Heart right ventricle (tissue), 16 donors: ENCODE measurements at regions of chr7 and their contacts with region 1.

Region 1: GRCh38 chr7:17640730-17641377 is 299.4 kb downstream of the SNX13 start:
- DNase-seq: peak in 1 of 2 donors; percentile 41
- ATAC-seq: no peak
- H3K4me3 ChIP-seq: no peak overlapping the region
- H3K27ac ChIP-seq: no peak overlapping the region
- H3K4me1 ChIP-seq: peaks cover 0 to 5% (median 0%) of the 10 kb centered on the region in 9 donors
- H3K27me3 ChIP-seq: no peaks in the 10 kb centered on the region
- CTCF ChIP-seq: peak; percentile 48 to 75 (median 65)

Region 2: GRCh38 chr7:16926283-16926682 is 714.6 kb before region 1 on chr7:
- intact Hi-C with region 1: loop called in 1 of 10 experiments (anchors 10 kb)
- DNase-seq: peak in 1 of 2 donors; percentile 21
- ATAC-seq: peak in 7 of 8 donors; percentile 52 to 87 (median 81)
- H3K4me3 ChIP-seq: no peak overlapping the region
- H3K27ac ChIP-seq: no peak overlapping the region
- H3K4me1 ChIP-seq: peaks cover 0 to 15% (median 0%) of the 10 kb centered on the region in 9 donors
- H3K27me3 ChIP-seq: no peaks in the 10 kb centered on the region
- CTCF ChIP-seq: peak in 8 of 9 donors; percentile 46 to 76 (median 66)

Region 3: GRCh38 chr7:16989811-16990413 is 650.9 kb before region 1 on chr7:
- intact Hi-C with region 1: loop called in 3 of 10 experiments (anchors 5 to 10 kb)
- DNase-seq: peak; percentile 10 to 55
- ATAC-seq: peak in 7 of 8 donors; percentile 41 to 92 (median 79)
- H3K4me3 ChIP-seq: peak overlapping the region in 6 of 10 donors; percentile 0 to 42 (median 32)
- H3K27ac ChIP-seq: peak overlapping the region in 8 of 10 donors; percentile 1 to 66 (median 42)
- H3K4me1 ChIP-seq: peaks cover 0 to 15% (median 8%) of the 10 kb centered on the region in 9 donors
- H3K27me3 ChIP-seq: no peaks in the 10 kb centered on the region
- CTCF ChIP-seq: no peak